Mammary epithelial cell (primary cell): ENCODE measurements at regions of chr22 and their contacts with region 1.

Region 1: GRCh38 chr22:37077884-37078485 is 26.4 kb downstream of the KCTD17 start:
- DNase-seq: peak; percentile 7
- H3K4me3 ChIP-seq: no peak overlapping the region
- H3K27ac ChIP-seq: no peak overlapping the region
- H3K4me1 ChIP-seq: no peaks in the 10 kb centered on the region
- H3K27me3 ChIP-seq: no peaks in the 10 kb centered on the region
- CTCF ChIP-seq: peak; percentile 91 to 100

Region 2: DNA sequence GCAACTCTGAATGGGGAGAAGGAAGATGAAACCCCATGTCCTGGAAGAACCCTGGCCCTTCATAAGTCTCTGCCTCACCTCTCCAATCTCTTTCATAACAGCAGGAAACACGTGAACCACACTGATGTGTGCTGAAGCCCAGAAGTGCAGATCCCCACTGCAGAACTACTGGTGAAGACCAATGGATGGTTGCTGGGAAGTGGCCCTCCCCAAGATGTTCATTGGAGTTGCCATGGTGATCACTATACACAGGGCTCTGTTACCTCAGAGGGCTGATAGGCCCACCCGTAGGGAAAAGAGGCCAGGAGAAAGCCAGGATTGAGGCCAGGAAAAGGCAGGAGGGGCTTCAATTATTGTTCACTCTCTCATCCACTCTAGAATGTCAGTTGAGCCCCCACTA is 70.3 kb before region 1 on chr22:
- CTCF ChIA-PET with region 1: no interaction called
- dilution Hi-C with region 1: loop called (anchors 5 kb)
- in situ Hi-C with region 1: no loop called
- intact Hi-C with region 1: no loop called
- DNase-seq: no peak
- H3K4me3 ChIP-seq: no peak overlapping the region
- H3K27ac ChIP-seq: no peak overlapping the region
- H3K4me1 ChIP-seq: no peaks in the 10 kb centered on the region
- H3K27me3 ChIP-seq: no peaks in the 10 kb centered on the region
- CTCF ChIP-seq: no peak

Region 3: GRCh38 chr22:37121887-37122591 is 44.1 kb after region 1 on chr22:
- CTCF ChIA-PET with region 1: no interaction called
- dilution Hi-C with region 1: loop called (anchors 10 kb)
- in situ Hi-C with region 1: no loop called
- intact Hi-C with region 1: no loop called
- DNase-seq: peak; percentile 84
- H3K4me3 ChIP-seq: no peak overlapping the region
- H3K27ac ChIP-seq: peak overlapping the region; percentile 48
- H3K4me1 ChIP-seq: peaks cover 13% of the 10 kb centered on the region
- H3K27me3 ChIP-seq: no peaks in the 10 kb centered on the region
- CTCF ChIP-seq: peak in 1 of 2 donors; percentile 37

Region 4: DNA sequence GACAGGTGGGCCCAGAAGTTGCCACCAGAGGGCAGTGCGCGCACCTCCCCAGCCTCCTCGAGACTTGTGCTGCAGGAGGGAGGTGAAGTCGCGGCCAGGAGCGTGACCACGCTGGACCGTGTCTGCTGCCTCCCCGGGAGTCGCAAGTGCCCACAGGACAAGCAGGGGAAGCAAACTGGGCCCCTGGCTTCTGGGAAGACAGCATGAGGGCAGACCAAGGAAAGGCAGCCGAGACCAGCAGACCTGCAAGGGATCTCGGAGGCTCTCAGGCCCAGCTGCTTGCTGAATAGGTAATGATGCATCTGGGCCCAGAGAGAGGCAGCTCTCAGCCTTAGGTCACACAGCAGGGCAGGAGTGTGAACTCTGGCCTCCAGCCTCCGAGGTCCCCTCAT is 88.7 kb after region 1 on chr22:
- CTCF ChIA-PET with region 1: no interaction called
- dilution Hi-C with region 1: no loop called
- in situ Hi-C with region 1: no loop called
- intact Hi-C with region 1: loop called (anchors 2 kb)
- DNase-seq: peak; percentile 53
- H3K4me3 ChIP-seq: no peak overlapping the region
- H3K27ac ChIP-seq: no peak overlapping the region
- H3K4me1 ChIP-seq: peaks cover 2% of the 10 kb centered on the region
- H3K27me3 ChIP-seq: no peaks in the 10 kb centered on the region
- CTCF ChIP-seq: peak; percentile 87 to 94

Region 5: DNA sequence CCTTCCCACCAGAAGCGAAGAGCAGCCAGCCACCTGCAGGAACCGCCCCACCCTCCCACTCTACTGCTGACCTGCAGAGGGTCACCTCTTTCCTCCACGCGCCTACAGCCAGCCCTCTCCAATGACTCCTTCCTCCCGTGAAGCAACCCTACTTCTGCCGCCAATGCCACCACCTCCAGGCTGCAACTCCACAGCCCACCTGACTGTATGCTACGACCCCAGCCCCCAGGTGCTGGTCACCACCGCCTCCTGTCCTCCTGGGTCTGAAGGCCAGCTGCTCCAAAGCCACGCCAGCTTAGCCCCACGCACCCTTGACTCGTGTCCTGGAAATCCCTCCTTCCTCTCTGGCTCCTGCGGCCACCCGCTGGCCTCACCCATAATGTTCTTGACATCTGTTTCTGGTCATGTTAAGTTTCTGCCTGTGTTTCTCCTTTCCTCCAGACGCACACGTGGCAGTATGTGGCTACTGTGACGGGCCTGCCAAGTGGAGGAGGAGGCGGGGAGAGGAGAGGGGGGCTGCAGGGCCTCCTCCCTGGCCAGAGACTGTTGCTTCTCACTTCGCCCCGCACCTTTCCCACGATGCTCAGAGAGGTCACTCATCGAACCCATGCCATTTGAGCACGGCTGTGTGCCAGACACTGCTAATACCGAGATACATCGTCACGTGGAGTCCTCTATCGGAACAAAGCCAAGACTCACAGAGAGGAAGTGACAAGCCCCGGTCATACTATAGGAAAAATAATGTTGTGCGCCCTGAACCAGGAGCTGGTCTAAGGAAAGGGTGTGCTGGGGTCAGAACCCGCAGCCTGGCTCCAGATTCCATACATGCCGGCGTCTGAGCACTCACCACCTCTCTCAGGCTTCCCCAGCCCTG is 98.5 kb after region 1 on chr22:
- CTCF ChIA-PET with region 1: no interaction called
- dilution Hi-C with region 1: loop called (anchors 5 kb)
- in situ Hi-C with region 1: no loop called
- intact Hi-C with region 1: no loop called
- DNase-seq: no peak
- H3K4me3 ChIP-seq: no peak overlapping the region
- H3K27ac ChIP-seq: no peak overlapping the region
- H3K4me1 ChIP-seq: peaks cover 7% of the 10 kb centered on the region
- H3K27me3 ChIP-seq: peaks cover 8% of the 10 kb centered on the region
- CTCF ChIP-seq: no peak

Region 6: GRCh38 chr22:37260901-37261336 is 182.9 kb after region 1 on chr22:
- CTCF ChIA-PET with region 1: no interaction called
- dilution Hi-C with region 1: loop called (anchors 5 kb)
- in situ Hi-C with region 1: no loop called
- intact Hi-C with region 1: loop called (anchors 2 kb)
- DNase-seq: peak; percentile 35
- H3K4me3 ChIP-seq: no peak overlapping the region
- H3K27ac ChIP-seq: no peak overlapping the region
- H3K4me1 ChIP-seq: peaks cover 23% of the 10 kb centered on the region
- H3K27me3 ChIP-seq: no peaks in the 10 kb centered on the region
- CTCF ChIP-seq: peak; percentile 91 to 95